ENCODE measurements at regions of chr2 and their contacts with region 1.

Region 1: GRCh38 chr2:62774555-62775366 is 69.2 kb downstream of the EHBP1 start:
- DNase-seq: peak; percentile 26 to 69
- H3K4me3 ChIP-seq: no peak overlapping the region
- H3K4me1 ChIP-seq: peaks cover 25% of the 10 kb centered on the region
- H3K27me3 ChIP-seq: no peaks in the 10 kb centered on the region

Region 2: DNA sequence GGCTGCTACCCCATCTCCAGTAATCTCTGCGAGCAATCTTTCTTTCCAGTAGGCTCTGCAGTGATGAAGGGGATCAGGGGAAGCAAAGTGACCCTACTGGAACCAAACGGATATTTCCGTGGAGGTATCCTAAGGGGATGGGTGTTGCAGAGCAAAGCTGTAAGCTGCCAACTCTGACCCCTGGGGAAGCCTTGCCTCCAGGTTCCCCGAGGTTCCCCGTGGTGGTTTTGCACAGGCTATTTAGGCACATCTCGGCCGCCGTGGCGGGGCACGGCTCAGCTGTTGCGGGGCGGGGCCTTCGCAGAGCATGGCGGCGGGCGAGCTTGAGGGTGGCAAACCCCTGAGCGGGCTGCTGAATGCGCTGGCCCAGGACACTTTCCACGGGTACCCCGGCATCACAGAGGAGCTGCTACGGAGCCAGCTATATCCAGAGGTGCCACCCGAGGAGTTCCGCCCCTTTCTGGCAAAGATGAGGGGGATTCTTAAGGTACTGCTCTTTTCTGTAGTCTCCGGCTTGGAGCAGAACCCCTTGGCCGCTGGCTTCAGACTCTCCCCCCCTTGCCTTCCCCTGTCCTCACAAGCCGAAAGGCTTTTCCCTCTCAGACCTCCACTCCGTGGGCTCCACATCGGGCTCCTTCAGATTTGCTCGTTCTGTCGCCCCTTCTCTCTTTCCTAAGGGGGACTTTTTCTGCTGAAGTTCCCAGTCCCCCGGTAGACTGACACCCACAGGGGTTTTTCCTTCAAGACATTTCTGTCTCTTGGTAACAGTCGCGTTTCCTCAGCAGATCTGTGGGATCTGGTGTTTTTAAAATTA is 869.2 kb before region 1 on chr2 and contains the start of gene COMMD1:
- in situ Hi-C with region 1: loop called (anchors 25 kb)
- DNase-seq: peak; percentile 69 to 85
- H3K4me3 ChIP-seq: peak within 1 kb of the TSS; percentile 57
- H3K4me1 ChIP-seq: peaks cover 6% of the 10 kb centered on the region
- H3K27me3 ChIP-seq: no peaks in the 10 kb centered on the region

Region 3: GRCh38 chr2:62456721-62457539 is 317.8 kb before region 1 on chr2:
- in situ Hi-C with region 1: loop called (anchors 5 kb)
- DNase-seq: peak; percentile 79 to 91
- H3K4me3 ChIP-seq: peak overlapping the region; percentile 29
- H3K4me1 ChIP-seq: peaks cover 17% of the 10 kb centered on the region
- H3K27me3 ChIP-seq: no peaks in the 10 kb centered on the region

Region 4: DNA sequence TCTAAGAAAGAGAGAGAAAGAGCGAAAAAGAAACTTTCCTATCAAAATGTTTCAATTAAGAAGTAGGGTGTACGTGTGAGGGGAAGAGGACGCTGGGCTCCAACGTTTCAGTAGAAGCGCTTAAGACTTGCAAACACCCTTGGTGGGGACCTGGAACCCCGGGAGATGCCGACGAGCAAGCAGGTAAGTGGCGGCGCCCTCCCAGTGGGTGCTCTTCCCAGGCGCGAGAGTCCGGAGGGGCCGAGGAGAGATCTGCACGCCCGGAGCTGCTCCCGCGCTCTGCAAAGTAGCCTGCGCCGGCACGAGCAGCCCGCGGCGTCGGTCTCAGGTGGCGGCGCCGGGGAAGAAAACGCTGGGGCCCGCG is 275.2 kb after region 1 on chr2:
- in situ Hi-C with region 1: loop called (anchors 25 kb)
- DNase-seq: peak in 1 of 2 experiments; percentile 63
- H3K4me3 ChIP-seq: peak overlapping the region; percentile 66
- H3K4me1 ChIP-seq: peaks cover 7% of the 10 kb centered on the region
- H3K27me3 ChIP-seq: no peaks in the 10 kb centered on the region